SK-MEL-5 (cell line): ENCODE measurements at regions of chr7 and their contacts with region 1.

Region 1: GRCh38 chr7:116899308-116899707 is 36.9 kb downstream of the CAPZA2 start:
- DNase-seq: no peak

Region 2: GRCh38 chr7:116862234-116862950 is 36.9 kb before region 1 on chr7 and contains the start of gene CAPZA2:
- in situ Hi-C with region 1: loop called (anchors 5 kb)
- DNase-seq: peak; percentile 93
- total RNA-seq, gene CAPZA2: 240 and 252 TPM in 2 replicates

Region 3: DNA sequence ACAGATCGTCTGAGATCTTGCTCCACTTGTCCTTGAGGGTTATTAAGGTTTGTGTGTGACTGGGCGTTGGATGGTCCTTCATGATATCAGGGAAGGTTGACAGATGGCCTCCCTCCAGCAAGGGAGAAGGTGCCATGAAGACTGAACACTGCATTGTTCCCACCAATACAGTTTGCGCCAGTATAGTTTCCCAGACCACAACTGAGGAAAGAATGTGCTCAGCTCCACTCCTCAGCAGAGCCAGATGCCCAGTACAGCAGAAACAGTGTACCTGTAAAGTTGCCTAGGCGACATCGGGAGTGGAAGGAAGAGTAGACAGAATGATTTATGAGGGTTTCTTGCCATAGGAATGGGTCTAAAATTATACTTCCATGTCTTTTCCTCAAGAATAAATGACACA is 191.5 kb after region 1 on chr7:
- in situ Hi-C with region 1: no loop called
- DNase-seq: no peak